ENCODE measurements at regions of chr20 and their contacts with region 1.

Region 1: GRCh38 chr20:63973636-63974402 is 4.1 kb upstream of the ZNF512B start:
- DNase-seq: peak; percentile 66 to 94 (median 87)

Region 2: DNA sequence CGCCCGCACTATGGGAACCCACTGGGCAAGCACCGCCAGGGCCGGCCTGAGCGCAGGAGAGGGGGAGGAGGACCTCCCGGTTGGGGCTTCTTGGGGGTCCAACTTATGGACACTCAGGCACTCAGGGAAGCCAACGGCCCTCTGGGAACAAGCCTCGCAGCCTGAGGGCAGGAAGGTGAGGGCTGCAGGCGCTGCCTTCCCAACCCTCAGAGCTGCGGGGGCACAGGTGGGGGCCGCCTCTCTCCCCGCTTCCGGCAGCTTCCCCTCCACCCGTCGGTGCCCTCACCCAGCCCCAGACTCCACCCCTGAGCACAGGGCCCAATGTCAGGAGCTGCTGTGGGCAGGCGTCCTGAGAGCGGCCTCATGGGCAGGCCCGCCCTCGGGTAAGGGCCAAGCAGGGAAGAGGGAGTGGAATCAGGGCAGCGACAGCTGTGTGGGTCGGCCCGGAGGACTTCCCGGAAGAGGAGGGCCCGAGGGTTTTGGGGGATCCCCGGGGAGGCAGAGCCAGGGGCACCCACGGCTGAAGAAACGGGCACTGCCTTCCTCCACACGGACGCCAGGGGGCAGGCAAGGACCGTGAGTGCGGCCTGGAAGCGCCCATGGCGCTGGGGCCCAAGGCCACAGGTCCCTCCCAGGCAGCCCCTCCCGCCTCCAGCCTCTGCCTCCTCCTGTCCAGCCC is 436.2 kb before region 1 on chr20:
- intact Hi-C with region 1: loop called (anchors 5 kb)
- DNase-seq: peak; percentile 31 to 89 (median 76)

Region 3: GRCh38 chr20:63785691-63786131 is 188.1 kb before region 1 on chr20:
- intact Hi-C with region 1: loop called (anchors 2 kb)
- DNase-seq: no peak

Region 4: DNA sequence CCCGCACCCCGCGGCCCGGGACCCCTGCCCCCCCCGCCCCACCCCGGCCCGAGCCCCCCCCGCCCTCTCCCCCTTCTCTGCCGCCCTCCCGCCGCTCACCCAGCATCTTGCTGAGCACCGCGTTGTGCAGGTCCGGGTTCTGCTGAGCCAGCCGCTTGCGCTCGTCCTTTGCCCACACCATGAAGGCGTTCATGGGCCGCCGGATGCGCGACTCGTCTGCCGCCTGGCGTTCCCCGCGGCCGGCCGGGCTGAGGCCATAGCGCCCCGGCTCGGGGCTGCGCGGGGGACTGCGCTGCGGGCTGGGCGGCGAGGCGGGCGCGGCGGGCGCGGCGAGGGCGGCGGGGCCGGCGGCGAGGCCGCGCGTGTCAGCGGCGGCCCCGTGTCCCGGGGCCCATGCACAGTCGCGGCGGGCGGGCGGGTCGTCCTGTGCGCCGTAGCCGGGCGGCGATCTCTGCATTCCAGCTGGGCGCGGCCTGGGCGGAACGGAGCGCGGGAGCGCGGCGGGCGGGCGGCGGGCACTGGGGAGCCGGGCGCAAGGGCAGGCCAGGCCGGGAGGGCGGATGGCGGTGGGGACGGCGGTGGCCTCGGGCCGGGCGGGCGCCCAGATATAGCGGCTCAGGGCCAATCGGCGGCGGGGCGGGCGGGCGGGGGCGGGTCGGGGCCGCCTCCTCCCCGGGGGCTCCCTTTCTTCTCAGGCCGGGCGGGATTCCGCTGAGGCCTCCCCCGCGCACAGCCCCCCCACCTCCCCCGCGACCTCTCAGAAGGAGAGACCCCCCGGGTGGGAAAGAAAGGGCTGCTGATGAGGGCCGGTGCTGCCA is 75.5 kb after region 1 on chr20 and contains the start of gene SOX18:
- intact Hi-C with region 1: no loop called
- DNase-seq: no peak

Measured in head of caudate nucleus (tissue), 42 donors.